Activated CD4-positive, alpha-beta T cell treated with anti-CD3 and anti-CD28 coated beads for 36 hours (primary cell): ENCODE measurements at regions of chr4 and their contacts with region 1.

Region 1: DNA sequence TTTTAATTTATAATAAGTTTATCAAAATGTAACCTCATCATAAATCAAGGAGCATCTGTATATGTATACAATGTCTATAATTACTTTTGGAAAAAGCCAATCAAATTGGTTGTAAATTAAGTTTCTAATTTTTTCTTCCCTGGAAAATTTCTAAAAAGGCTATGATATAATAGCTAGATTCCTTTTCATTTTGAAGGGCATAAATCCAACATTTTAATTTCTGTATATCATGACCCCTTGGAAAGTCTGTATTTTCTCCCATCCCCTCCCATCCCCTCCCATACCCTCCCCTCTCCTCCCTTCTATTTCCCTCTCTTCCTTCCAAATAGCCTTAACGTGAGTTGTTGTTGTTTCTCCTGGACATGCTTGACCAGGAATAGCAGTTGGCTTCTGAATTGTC is 247.1 kb upstream of the FSTL5 start:
- DNase-seq: no peak
- ATAC-seq: no peak
- H3K4me3 Mint-ChIP-seq: no peak overlapping the region
- H3K27ac Mint-ChIP-seq: no peak overlapping the region
- H3K4me1 Mint-ChIP-seq: no peaks in the 10 kb centered on the region
- H3K27me3 Mint-ChIP-seq: no peaks in the 10 kb centered on the region

Region 2: GRCh38 chr4:162461952-162462351 is 51.1 kb after region 1 on chr4:
- CTCF ChIA-PET with region 1: no interaction called
- POLR2A ChIA-PET with region 1: no interaction called
- intact Hi-C with region 1: loop called in 1 of 2 experiments (anchors 5 kb)
- DNase-seq: no peak
- ATAC-seq: no peak
- H3K4me3 Mint-ChIP-seq: no peak overlapping the region
- H3K27ac Mint-ChIP-seq: no peak overlapping the region
- H3K4me1 Mint-ChIP-seq: no peaks in the 10 kb centered on the region
- H3K27me3 Mint-ChIP-seq: no peaks in the 10 kb centered on the region